ENCODE measurements at regions of chr17 and their contacts with region 1.

Region 1: DNA sequence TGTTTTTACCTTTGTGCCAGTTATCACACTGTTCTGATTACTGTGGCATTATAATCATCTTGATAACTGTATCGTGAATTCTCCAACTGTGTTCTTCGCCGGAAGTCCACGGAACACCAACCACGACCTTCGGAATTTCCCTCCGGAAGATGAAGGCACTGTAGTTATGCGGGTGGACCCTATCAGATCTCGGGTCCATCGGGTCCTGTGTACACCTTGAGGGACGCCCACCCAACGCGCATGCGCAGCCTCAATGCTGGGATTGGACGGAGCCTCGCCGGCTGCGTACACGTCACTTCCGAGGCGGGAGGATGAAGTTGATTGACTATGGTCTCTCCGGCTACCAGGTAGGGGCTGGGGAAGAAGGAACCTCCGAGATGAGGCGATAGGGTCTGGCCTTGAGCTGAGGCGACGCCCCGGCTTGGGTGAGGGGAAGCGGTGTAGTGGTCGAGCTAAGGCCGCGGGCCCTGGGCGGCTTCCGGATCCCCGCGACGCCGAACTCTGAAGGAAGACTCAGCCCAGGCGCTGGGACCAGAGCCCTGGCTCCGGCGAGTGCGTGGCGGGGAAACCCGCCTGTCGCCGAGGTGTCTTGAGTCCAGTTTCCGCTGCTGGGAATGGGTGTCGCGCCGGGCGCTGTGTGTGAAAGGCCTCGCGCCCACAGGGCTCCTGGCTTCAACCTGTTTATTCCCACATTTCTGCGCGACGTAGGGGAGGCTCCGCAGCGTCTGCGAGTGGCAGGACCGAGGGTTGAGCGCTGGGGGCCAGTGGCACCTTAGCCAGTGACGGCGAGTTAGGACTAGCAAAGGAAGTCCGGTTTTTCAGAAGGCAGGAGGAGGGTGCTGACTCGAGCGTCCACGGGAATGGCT is at the start of gene DHRS7B:
- DNase-seq: peak; percentile 74
- H3K4me3 ChIP-seq: peak within 1 kb of the TSS; percentile 99
- H3K27ac ChIP-seq: peak within 1 kb of the TSS; percentile 81
- H3K27me3 ChIP-seq: peaks cover 8% of the 10 kb centered on the region
- CTCF ChIP-seq: no peak
- polyA plus RNA-seq, gene DHRS7B: 12.5 and 14.9 TPM in 2 replicates

Region 2: GRCh38 chr17:20032636-20033035 is 1094.2 kb before region 1 on chr17:
- CTCF ChIA-PET with region 1: no interaction called
- POLR2A ChIA-PET with region 1: no interaction called
- DNase-seq: no peak
- H3K4me3 ChIP-seq: no peak overlapping the region
- H3K27ac ChIP-seq: no peak overlapping the region
- H3K27me3 ChIP-seq: peaks cover 10% of the 10 kb centered on the region
- CTCF ChIP-seq: no peak

Region 3: DNA sequence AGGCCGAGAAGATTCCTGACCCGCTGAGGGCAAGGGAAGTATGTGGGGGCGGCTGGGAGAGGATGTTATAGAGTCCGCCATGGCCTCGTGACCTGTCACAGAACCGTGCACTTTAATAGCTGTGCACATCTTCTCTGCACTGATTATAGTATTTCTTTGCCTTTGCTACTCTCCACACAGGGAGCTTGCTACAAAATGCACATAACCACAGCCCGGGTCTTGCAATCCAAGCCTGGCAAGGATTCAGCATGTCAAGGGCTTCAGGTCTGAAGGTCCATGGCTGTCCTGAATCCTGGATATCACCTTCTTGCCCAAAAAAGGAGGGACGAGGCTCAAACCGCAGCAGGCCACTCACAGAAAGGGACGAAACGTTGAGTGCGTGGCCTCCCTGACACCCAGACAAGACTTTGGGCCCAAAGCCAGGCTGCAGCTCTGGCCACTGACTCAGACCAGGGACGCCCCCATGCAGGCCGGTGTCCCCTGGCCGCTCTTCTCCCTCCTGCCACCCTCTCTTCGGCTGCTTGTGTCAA is 127.8 kb before region 1 on chr17:
- CTCF ChIA-PET with region 1: no interaction called
- POLR2A ChIA-PET with region 1: no interaction called
- DNase-seq: no peak
- H3K4me3 ChIP-seq: no peak overlapping the region
- H3K27ac ChIP-seq: peak overlapping the region; percentile 21
- H3K27me3 ChIP-seq: no peaks in the 10 kb centered on the region
- CTCF ChIP-seq: no peak

Region 4: DNA sequence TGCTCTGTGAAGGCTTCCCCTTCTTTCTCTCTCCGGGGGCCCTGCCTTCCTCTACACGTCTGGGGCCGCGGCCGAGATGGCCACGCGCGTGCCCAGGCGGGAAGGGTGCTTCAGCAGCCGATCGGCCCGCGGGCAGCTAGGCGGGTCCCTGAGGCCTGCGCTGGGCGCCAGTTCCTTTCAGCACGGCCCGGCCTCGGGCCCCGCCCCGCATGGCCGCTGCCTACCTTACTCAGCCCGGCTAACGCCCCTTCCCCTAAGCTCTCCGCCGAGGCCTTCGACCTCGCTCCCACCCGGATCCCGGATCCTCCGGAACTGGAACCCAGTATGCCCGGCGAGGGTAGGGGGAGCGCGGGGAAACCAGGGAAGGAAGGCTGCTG is 86.7 kb after region 1 on chr17:
- CTCF ChIA-PET with region 1: interaction called, 11 read pairs
- POLR2A ChIA-PET with region 1: no interaction called
- DNase-seq: no peak
- H3K4me3 ChIP-seq: peak overlapping the region; percentile 93
- H3K27ac ChIP-seq: peak overlapping the region; percentile 84
- H3K27me3 ChIP-seq: no peaks in the 10 kb centered on the region
- CTCF ChIP-seq: no peak

Region 5: DNA sequence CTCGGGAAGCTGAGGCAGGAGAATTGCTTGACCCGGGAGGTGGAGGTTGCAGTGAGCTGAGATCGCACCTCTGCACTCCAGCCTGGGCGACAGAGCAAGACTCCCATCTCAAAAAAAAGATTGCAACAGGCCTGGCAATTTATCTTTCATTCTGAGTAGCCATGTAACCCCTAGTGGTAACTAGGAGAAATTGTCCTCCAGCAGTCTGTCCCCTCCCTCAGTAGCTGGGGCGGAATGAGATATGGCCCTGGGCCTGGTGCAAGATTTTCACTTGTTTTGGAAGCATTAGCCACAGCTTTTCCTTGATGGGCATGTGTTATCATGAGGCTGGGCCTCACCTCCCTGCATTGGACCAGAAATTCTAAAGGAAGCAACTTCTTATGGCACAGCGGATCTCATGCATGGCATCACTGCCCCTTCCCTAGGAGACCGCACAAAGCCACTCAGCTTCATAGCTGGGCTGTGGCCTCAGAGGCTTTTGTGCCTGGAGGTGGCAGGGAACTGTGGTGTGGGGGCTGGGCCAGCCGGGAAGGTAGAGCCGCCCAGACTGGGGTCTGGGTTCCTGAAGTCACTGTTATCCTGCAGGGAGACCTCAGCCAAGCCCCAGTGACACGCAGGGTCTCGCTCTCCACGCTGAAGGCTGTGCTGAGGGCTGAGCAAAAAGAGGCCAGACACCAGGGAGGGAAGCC is 112.9 kb after region 1 on chr17:
- CTCF ChIA-PET with region 1: interaction called, 15 read pairs
- POLR2A ChIA-PET with region 1: no interaction called
- DNase-seq: no peak
- H3K4me3 ChIP-seq: no peak overlapping the region
- H3K27ac ChIP-seq: no peak overlapping the region
- H3K27me3 ChIP-seq: peaks cover 6% of the 10 kb centered on the region
- CTCF ChIP-seq: peak; percentile 55

Region 6: GRCh38 chr17:21275579-21276263 is 148.8 kb after region 1 on chr17:
- CTCF ChIA-PET with region 1: interaction called, 17 read pairs
- POLR2A ChIA-PET with region 1: no interaction called
- DNase-seq: no peak
- H3K4me3 ChIP-seq: peak overlapping the region; percentile 69
- H3K27ac ChIP-seq: no peak overlapping the region
- H3K27me3 ChIP-seq: peaks cover 4% of the 10 kb centered on the region
- CTCF ChIP-seq: no peak